ENCODE measurements at regions of chr6 and their contacts with region 1.

Region 1: GRCh38 chr6:56475736-56476457 is 166.8 kb downstream of the DST start:
- DNase-seq: peak; percentile 31
- ATAC-seq: peak; percentile 84 to 89

Region 2: GRCh38 chr6:56399250-56399671 is 76.6 kb before region 1 on chr6:
- intact Hi-C with region 1: no loop called
- DNase-seq: no peak
- ATAC-seq: peak in 1 of 2 donors; percentile 54

Region 3: GRCh38 chr6:56604186-56604585 is 128.3 kb after region 1 on chr6:
- intact Hi-C with region 1: loop called in 1 of 2 experiments (anchors 10 kb)
- DNase-seq: no peak
- ATAC-seq: no peak

Measured in left cardiac atrium (tissue), 4 donors.